Motor neuron (in vitro differentiated cells): ENCODE measurements at regions of chr16 and their contacts with region 1.

Region 1: GRCh38 chr16:81737885-81738786 is 41.0 kb upstream of the PLCG2 start:
- ATAC-seq: peak; percentile 95 to 98 (median 97)
- H3K4me3 ChIP-seq: no peak overlapping the region
- H3K27ac ChIP-seq: no peak overlapping the region
- H3K4me1 ChIP-seq: peaks cover 2 to 6% of the 10 kb centered on the region in 2 donors

Region 2: DNA sequence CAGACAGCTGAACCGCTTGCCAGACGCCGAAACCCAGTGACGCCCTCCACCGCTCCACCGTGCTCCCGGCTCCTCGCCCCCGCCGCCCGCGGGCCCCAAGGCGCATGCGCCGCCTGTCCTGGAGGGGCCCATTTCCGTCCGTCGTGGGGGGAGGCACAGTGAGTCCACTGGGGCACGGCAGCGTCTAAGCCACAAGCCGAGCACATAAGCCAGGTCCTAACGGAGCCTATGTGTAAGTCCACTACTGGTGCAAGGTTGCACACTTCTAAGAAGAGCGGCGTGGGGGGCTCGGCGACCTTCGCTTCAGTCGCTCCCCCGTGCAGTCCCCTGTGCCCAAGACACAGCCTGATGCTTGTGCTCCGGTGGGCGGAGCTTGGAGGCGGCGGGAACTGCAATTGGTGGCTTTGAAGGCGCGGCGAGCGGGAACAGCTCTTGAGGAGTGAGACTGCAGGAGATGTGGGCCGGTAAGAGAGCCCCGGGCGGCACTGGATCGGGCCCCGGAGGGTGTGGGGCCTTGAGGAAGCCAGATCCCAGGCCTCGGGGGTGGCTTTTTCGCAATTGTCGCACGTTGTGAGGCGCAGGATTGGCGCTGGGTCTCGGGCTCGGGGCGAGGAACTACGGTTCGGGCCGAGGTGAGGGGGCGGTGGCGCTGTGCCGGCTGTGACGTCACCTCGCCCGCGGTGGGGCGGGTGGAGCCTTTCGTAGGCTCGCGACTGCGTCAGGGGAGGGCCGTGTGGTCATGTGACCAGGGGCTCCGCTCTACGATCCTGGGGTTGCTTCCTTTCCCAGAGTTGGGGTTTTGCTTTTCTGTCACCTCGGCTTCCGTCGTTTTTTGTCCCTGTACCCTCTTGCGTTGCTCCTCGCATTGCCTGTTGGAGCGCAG is 731.1 kb before region 1 on chr16 and contains the starts of genes CENPN and CMC2:
- in situ Hi-C with region 1: loop called in 2 of 9 experiments (anchors 25 kb)
- ATAC-seq: peak; percentile 83 to 94 (median 92)
- H3K4me3 ChIP-seq: peak within 1 kb of the TSS; percentile 56 to 96 (median 83)
- H3K27ac ChIP-seq: peak within 1 kb of the TSS; percentile 100
- H3K4me1 ChIP-seq: peaks cover 10 to 13% of the 10 kb centered on the region in 2 donors
- total RNA-seq, gene CENPN: 3.2 to 38.2 (median 6.6) TPM
- total RNA-seq, gene CMC2: 36.6 to 76.1 (median 53.9) TPM

Region 3: DNA sequence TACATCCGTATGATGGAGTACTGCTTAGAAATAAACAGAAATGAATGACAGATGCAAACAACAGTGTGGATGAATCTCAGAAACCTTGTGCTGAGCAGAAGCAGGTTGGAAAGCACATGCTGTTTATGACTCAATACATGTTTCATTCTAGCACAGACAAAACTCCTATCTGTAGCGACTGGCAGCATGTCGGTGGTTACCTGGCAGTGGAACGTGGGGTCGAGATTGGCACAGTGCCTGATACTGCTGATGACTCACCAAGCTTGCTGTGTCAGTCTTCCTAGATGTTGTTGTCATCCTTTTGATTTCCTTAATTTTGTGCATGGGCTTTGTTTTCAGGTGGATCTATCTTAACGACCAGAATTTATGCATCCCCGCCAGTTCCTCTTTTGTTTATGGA is 361.3 kb before region 1 on chr16:
- in situ Hi-C with region 1: loop called in 3 of 9 experiments (anchors 25 kb)
- ATAC-seq: no peak
- H3K4me3 ChIP-seq: no peak overlapping the region
- H3K27ac ChIP-seq: no peak overlapping the region
- H3K4me1 ChIP-seq: no peaks in the 10 kb centered on the region

Region 4: GRCh38 chr16:81403616-81404373 is 334.3 kb before region 1 on chr16:
- in situ Hi-C with region 1: loop called in 4 of 9 experiments (anchors 25 kb)
- ATAC-seq: peak; percentile 77 to 99 (median 98)
- H3K4me3 ChIP-seq: peak overlapping the region in 2 of 5 donors; percentile 10 to 13
- H3K27ac ChIP-seq: no peak overlapping the region
- H3K4me1 ChIP-seq: no peaks in the 10 kb centered on the region

Region 5: DNA sequence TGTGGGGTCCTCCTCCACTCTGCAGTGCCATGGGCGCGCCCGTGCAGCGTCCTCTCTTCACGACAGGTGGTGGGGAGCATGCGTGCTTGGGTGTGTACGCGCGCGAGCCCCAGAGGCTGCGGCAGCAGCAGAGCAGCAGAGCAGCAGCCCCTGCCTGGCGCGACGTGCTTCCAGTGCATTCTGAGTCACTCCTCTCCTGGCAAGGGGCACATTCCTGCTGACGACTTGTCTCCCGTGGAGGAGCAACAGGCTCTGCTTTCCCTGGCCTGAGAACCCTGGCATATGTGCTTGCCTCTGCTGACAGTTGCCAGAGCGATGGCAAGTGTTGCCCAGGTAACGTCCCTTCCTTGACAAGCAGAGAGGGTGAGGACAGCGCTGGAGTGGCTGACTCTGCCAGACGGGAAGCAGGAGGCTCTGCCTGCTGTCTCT is 92.9 kb before region 1 on chr16:
- in situ Hi-C with region 1: no loop called
- ATAC-seq: peak in 7 of 8 experiments; percentile 43 to 88 (median 75)
- H3K4me3 ChIP-seq: no peak overlapping the region
- H3K27ac ChIP-seq: no peak overlapping the region
- H3K4me1 ChIP-seq: peaks cover 33 to 36% of the 10 kb centered on the region in 2 donors

Region 6: DNA sequence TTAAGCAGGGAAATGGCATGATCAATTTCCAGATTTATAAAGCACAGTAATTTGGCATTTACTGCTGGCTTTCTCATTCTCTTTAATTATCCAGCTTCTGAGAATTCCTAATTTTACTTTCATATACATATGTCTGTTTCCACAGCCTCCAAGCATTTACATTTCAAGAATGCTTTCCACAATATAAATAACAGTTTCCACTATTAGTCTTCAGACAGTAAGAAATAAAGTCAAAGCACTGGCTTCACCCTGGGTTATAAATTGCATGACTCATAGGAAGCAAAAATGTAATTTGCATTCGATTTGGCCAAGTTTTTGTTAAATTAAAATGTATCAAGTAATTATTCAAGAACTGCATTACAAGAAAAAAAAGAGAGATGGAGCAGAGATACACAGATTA is 378.4 kb after region 1 on chr16:
- in situ Hi-C with region 1: no loop called
- ATAC-seq: peak in 4 of 8 experiments; percentile 27 to 60 (median 44)
- H3K4me3 ChIP-seq: no peak overlapping the region
- H3K27ac ChIP-seq: no peak overlapping the region
- H3K4me1 ChIP-seq: peaks cover 11 to 14% of the 10 kb centered on the region in 2 donors